Head of caudate nucleus (tissue), 42 donors: ENCODE measurements at regions of chr16 and their contacts with region 1.

Region 1: GRCh38 chr16:30844671-30845449 is 49.0 kb downstream of the BCL7C start:
- DNase-seq: peak in 38 of 42 donors; percentile 23 to 90 (median 71)

Region 2: GRCh38 chr16:30571695-30572600 is 272.9 kb before region 1 on chr16 and contains the start of gene ZNF688:
- intact Hi-C with region 1: no loop called
- DNase-seq: peak; percentile 88 to 98 (median 95)

Region 3: GRCh38 chr16:30910427-30911029 is 65.7 kb after region 1 on chr16:
- intact Hi-C with region 1: loop called (anchors 10 kb)
- DNase-seq: no peak